Activated B cell treated with CpG ODN at 0.5 μM for 24 hours (primary cell): ENCODE measurements at regions of chr2 and their contacts with region 1.

Region 1: DNA sequence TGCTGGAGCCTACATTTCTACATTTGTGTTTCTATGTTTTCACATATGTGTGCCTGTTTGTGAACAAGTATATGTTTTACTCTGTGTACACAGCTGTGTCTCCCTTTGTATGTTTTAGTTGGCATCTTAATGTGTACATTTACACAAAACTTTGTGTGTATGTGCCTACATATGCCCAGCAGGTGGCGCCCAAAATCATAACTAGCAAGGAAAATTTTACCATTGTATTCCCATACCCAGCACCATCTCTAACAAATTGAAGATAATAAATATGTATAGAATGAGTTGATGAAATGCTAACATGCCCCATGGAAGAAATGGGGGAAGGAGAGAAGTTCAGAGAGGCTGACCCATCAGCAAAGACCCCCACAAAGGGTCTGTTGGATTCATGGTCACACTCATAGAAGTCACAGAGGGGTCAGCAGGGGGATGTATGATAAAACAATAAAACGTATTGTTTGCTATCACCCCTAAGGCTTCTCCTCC is 48.1 kb downstream of the PKDCC start:
- DNase-seq: peak; percentile 45
- ATAC-seq: peak; percentile 30
- H3K4me3 Mint-ChIP-seq: no peak overlapping the region
- H3K27ac Mint-ChIP-seq: no peak overlapping the region
- H3K4me1 Mint-ChIP-seq: peaks cover 49% of the 10 kb centered on the region
- H3K27me3 Mint-ChIP-seq: no peaks in the 10 kb centered on the region
- CTCF ChIP-seq: peak; percentile 31

Region 2: DNA sequence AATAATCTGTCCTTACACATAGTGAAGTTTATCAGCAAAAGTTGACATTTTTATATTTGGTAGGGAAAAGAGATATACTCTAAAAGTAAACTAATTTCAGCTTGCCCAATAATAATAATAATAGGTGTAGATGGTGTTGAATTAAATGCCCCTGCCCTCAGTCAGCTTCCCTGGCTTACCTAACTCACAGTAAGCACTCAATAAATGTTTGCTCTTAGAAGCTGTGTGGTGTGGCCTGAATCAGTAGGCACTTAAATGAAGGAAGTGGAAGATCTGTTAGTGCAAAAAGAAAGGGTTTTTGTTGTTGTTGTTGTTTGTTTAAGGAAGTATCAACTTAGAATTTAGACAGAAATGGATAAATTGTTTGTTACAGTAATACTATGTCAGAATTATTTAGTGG is 109.4 kb after region 1 on chr2:
- CTCF ChIA-PET with region 1: interaction called, 32 read pairs
- POLR2A ChIA-PET with region 1: no interaction called
- intact Hi-C with region 1: no loop called
- DNase-seq: no peak
- ATAC-seq: no peak
- H3K4me3 Mint-ChIP-seq: no peak overlapping the region
- H3K27ac Mint-ChIP-seq: peak overlapping the region; percentile 9
- H3K4me1 Mint-ChIP-seq: peaks cover 53% of the 10 kb centered on the region
- H3K27me3 Mint-ChIP-seq: no peaks in the 10 kb centered on the region
- CTCF ChIP-seq: no peak

Region 3: DNA sequence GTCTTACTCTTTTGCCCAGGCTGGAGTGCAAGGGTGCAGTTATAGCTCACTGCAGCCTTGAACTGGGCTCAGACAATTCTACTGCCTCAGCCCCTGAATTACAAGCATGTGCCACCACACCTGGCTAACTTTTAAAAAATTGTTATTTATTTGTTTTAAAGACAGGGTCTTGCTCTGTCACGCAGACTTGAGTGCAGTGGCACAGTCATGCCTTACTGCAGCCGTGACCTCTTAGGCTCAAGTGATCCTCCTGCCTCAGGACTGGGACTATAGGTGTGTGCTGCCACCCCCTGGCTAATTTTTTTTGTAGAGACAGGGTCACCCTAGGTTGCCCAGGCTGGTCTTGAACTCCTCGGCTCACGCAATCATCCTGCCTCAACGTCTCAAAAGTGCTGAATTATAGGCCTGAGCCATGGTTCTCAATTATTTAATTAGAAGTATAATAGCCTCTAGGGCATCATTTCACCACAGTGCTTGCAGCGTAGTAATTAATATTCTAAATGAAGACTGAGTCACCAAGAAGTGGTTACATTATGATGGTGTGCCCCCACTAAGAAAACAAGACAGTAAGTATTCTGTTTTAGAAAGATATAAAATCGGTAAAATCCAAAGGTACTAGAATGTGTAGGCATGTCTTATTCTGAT is 142.8 kb after region 1 on chr2:
- CTCF ChIA-PET with region 1: interaction called, 81 read pairs
- POLR2A ChIA-PET with region 1: no interaction called
- intact Hi-C with region 1: loop called (anchors 1 kb)
- DNase-seq: no peak
- ATAC-seq: peak; percentile 93
- H3K4me3 Mint-ChIP-seq: no peak overlapping the region
- H3K27ac Mint-ChIP-seq: no peak overlapping the region
- H3K4me1 Mint-ChIP-seq: peaks cover 82% of the 10 kb centered on the region
- H3K27me3 Mint-ChIP-seq: no peaks in the 10 kb centered on the region
- CTCF ChIP-seq: no peak

Region 4: GRCh38 chr2:42328148-42328833 is 232.3 kb after region 1 on chr2:
- CTCF ChIA-PET with region 1: interaction called, 19 read pairs
- POLR2A ChIA-PET with region 1: no interaction called
- intact Hi-C with region 1: loop called (anchors 1 kb)
- DNase-seq: no peak
- ATAC-seq: no peak
- H3K4me3 Mint-ChIP-seq: no peak overlapping the region
- H3K27ac Mint-ChIP-seq: no peak overlapping the region
- H3K4me1 Mint-ChIP-seq: no peaks in the 10 kb centered on the region
- H3K27me3 Mint-ChIP-seq: no peaks in the 10 kb centered on the region
- CTCF ChIP-seq: no peak

Region 5: DNA sequence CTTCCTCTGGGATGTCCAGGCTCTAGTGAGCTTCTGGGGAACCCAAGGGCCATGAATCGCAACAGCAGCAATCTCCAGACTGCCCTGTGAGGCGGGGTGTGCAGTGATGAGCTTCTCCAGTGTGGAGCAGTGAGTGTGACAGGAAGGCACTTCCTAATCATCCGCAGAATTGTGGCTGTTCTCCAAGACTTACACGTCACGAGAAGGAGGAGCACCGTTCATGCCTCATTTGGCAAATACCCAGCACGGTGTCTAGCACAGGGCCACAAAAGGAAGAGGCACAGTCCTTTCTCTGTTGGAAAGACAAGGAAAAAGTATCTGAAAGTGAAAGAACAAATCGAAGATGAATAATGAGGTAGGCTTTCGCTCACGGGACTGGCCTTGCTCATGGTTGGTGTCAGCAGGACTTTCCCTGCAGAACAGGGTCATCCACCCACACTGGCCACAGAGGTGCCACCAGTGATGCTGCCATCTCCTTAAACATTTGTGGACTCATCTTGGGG is 821.5 kb after region 1 on chr2:
- CTCF ChIA-PET with region 1: no interaction called
- POLR2A ChIA-PET with region 1: no interaction called
- intact Hi-C with region 1: no loop called
- DNase-seq: no peak
- ATAC-seq: no peak
- H3K4me3 Mint-ChIP-seq: no peak overlapping the region
- H3K27ac Mint-ChIP-seq: no peak overlapping the region
- H3K4me1 Mint-ChIP-seq: peaks cover 3% of the 10 kb centered on the region
- H3K27me3 Mint-ChIP-seq: peaks cover 3% of the 10 kb centered on the region
- CTCF ChIP-seq: no peak